ENCODE measurements at regions of chr9 and their contacts with region 1.

Region 1: DNA sequence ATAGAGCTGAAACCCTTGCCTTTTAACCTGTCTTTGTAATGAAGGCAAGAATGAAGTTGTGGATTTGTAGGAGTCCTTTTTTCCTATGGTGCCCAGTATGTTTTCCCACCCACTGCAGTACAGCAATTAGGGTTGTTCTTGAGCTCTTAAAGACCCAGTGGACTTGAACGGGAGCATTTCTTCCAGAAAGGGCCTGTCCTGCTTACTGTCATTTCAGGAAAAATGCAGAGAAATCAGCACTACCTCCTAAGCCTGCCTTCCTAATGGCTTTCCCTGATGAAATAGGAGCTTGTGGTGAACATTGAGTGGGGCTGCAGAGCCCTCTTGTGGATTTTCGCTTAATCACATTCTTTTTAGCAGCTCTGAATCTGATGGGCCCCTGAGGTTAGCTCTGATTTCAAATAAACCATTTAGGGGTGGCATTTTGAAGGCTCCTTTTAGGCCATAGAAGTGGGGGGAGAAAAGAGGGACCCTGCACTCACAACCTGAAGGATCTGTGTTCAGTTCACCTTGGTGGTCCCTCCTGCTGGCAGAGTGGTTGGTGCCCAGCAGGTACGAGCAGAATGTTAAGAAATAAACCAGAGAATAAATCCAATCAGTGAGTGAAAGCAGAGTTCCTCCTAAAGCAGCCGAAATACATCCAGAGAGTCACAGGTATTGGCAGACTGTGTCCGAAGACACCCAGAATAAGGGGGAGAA is 188.0 kb upstream of the KLF9 start:
- DNase-seq: peak; percentile 51 to 81 (median 68)
- H3K4me3 ChIP-seq: no peak overlapping the region
- H3K4me3 Mint-ChIP-seq: no peak overlapping the region
- H3K27ac ChIP-seq: no peak overlapping the region
- H3K27ac Mint-ChIP-seq: peak overlapping the region in 2 of 7 donors; percentile 7 to 48
- H3K4me1 ChIP-seq: peaks cover 3% of the 10 kb centered on the region in 2 donors
- H3K4me1 Mint-ChIP-seq: peaks cover 8% of the 10 kb centered on the region
- H3K27me3 ChIP-seq: no peaks in the 10 kb centered on the region
- H3K27me3 Mint-ChIP-seq: peaks cover 0 to 2% (median 2%) of the 10 kb centered on the region in 3 donors
- CTCF ChIP-seq: peak; percentile 80

Region 2: DNA sequence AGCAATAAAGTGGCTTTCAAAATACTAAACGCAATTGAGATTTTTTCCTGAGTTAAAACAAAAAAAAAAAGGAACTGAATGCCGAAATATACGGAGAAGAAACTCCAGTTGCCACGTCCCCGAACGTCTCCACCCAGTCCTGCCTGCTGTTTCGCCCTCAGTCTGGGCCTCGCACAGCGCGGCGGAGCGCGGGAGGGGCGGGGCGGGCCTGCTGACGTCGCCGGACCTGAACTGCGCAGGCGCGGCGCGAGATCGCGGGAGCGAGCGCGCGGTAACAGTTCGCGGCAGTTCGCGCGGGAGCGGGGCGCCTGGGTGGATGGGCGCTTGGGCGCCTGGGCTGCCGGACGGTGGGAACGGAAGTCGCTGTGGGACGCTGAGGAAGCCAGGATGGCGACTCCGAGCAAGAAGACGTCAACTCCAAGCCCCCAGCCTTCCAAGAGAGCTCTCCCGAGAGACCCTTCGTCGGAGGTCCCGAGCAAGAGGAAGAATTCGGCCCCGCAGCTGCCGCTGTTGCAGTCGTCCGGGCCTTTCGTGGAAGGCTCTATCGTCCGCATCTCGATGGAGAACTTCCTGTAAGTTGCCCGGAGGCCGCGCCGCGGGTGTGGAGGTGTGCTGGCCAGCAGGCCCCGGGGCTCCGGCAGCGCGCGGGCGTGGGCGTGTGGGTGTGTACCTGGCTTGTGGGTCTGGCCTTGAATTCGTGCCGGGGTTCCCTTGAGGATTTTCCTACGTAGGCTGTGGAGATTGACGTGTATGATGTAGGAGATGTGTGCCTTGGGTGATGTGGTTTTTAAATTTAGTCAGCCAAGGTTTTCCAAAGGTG is 343.6 kb before region 1 on chr9 and contains the start of gene SMC5:
- intact Hi-C with region 1: loop called in 1 of 2 experiments (anchors 10 kb)
- DNase-seq: peak; percentile 86 to 91 (median 91)
- H3K4me3 ChIP-seq: peak within 1 kb of the TSS; percentile 81 to 91 (median 86)
- H3K4me3 Mint-ChIP-seq: peak within 1 kb of the TSS; percentile 92 to 94
- H3K27ac ChIP-seq: peak within 1 kb of the TSS; percentile 93 to 96
- H3K27ac Mint-ChIP-seq: peak within 1 kb of the TSS; percentile 86 to 98 (median 94)
- H3K4me1 ChIP-seq: peaks cover 25 to 34% of the 10 kb centered on the region in 2 donors
- H3K4me1 Mint-ChIP-seq: peaks cover 53% of the 10 kb centered on the region
- H3K27me3 ChIP-seq: no peaks in the 10 kb centered on the region
- H3K27me3 Mint-ChIP-seq: peaks cover 0 to 3% (median 0%) of the 10 kb centered on the region in 3 donors
- CTCF ChIP-seq: no peak
- polyA plus RNA-seq, gene SMC5: 4.9 to 13.6 (median 5.1) TPM

Region 3: GRCh38 chr9:70340572-70340971 is 261.9 kb before region 1 on chr9:
- intact Hi-C with region 1: loop called (anchors 2 to 10 kb)
- DNase-seq: peak in 1 of 3 donors; percentile 29
- H3K4me3 ChIP-seq: no peak overlapping the region
- H3K4me3 Mint-ChIP-seq: no peak overlapping the region
- H3K27ac ChIP-seq: no peak overlapping the region
- H3K27ac Mint-ChIP-seq: no peak overlapping the region
- H3K4me1 ChIP-seq: no peaks in the 10 kb centered on the region
- H3K4me1 Mint-ChIP-seq: no peaks in the 10 kb centered on the region
- H3K27me3 ChIP-seq: no peaks in the 10 kb centered on the region
- H3K27me3 Mint-ChIP-seq: peaks cover 0 to 2% (median 0%) of the 10 kb centered on the region in 3 donors
- CTCF ChIP-seq: peak; percentile 64

Region 4: DNA sequence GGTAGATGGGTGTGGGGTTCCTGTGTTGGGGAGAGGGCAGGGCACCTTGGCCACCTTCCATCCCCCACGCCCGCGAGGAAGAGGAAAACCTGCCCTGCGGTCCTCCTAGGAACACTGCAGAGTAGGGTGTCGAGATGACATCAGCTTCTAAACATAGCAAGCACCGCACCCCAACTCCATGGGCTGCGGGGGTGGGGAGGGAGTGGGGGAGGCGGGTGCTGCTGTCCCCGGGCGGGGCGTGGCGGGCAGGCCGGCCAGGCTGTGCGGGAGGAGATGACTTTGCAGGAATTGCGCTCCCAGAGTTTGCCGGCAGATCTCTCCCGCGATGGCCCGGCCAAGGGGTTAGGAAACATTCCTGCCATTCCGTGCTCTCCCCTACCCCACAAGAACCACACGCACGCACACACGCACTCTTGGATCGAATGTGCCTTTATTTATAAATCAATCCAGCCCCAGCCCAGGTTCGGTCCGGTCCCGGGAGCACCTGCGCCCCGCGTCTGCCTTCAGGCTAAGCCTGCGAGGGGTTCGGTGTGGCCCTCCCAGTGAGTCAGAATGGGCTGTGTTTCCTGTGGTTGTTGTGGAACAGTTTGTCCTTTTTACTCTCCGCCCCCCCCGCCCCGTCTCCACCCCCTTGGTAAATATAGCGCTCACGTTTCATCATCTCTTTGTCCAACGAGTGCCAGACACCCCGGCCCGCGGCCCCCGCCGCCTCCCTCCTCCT is 182.8 kb before region 1 on chr9:
- intact Hi-C with region 1: loop called in 1 of 2 experiments (anchors 5 kb)
- DNase-seq: peak; percentile 93 to 94 (median 94)
- H3K4me3 ChIP-seq: peak overlapping the region; percentile 40 to 75 (median 54)
- H3K4me3 Mint-ChIP-seq: peak overlapping the region; percentile 92 to 97
- H3K27ac ChIP-seq: peak overlapping the region; percentile 97 to 99
- H3K27ac Mint-ChIP-seq: peak overlapping the region; percentile 99 to 100 (median 100)
- H3K4me1 ChIP-seq: peaks cover 36 to 49% of the 10 kb centered on the region in 2 donors
- H3K4me1 Mint-ChIP-seq: peaks cover 34% of the 10 kb centered on the region
- H3K27me3 ChIP-seq: no peaks in the 10 kb centered on the region
- H3K27me3 Mint-ChIP-seq: peaks cover 0 to 3% (median 2%) of the 10 kb centered on the region in 3 donors
- CTCF ChIP-seq: no peak

Region 5: DNA sequence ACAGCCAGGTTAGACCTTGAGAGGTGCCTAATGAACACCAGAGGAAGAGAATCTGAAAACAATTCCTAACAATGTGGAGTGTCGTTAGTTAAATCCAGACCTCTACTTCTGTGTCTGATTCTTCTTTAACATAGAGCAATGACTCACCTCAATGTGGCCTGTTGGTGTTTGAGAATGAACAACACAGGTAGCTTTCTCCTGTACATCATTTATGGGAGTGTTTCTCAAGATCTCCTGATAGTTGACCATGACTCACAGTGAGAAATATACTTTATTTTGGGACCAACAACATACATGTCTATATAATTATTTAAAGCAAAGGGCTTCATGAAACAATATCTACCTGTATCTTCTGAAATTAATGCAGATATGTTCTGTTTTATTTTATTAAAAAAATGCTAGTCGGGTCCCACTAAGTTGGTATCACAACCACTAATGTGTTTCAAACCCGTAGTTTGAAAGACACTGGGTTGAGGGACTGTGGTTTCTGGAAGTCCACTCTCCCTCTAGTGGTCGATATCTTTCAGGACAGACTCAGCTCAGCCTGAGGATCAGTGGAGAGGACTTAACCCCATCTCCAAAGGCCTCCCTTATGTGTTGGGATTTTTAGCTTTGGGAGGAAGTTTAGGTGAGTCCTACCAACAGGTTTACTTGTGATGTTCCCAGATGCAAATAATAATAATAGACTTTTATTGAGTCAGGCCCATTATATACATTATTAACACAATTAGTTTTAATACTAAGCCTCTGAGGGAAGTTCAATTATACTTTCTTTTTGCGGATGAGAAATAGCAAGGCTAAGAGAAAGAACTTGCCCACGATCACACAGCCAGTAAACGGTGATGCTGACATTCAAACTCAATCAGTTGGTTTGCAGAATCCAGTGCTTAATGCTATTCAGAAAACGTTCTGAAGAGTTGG is 118.0 kb before region 1 on chr9:
- intact Hi-C with region 1: loop called in 1 of 2 experiments (anchors 5 kb)
- DNase-seq: peak; percentile 51 to 63 (median 62)
- H3K4me3 ChIP-seq: no peak overlapping the region
- H3K4me3 Mint-ChIP-seq: no peak overlapping the region
- H3K27ac ChIP-seq: no peak overlapping the region
- H3K27ac Mint-ChIP-seq: peak overlapping the region in 2 of 7 donors; percentile 21 to 80
- H3K4me1 ChIP-seq: peaks cover 0 to 7% of the 10 kb centered on the region in 2 donors
- H3K4me1 Mint-ChIP-seq: peaks cover 15% of the 10 kb centered on the region
- H3K27me3 ChIP-seq: no peaks in the 10 kb centered on the region
- H3K27me3 Mint-ChIP-seq: peaks cover 0 to 6% (median 0%) of the 10 kb centered on the region in 3 donors
- CTCF ChIP-seq: peak; percentile 79

Region 6: DNA sequence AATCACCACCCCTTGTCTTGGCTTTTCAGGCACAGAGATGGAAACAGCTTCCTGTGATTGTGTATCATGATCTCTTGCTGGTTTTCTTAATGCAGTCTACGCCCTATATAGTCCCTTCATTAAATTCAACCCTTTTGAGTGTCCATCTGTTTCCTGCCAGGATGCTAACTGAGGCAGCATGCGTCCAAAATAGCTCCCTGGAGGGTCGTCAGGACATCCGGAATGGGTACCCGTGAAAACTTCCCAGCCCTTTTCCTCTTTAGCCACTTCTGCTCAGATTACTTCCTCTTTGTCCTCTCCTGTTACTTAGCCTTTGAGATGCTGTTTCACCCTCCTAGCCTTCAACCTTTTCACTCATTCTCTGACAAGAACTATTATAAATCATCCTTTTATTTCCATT is 108.2 kb before region 1 on chr9:
- intact Hi-C with region 1: loop called in 1 of 2 experiments (anchors 10 kb)
- DNase-seq: peak in 2 of 3 donors; percentile 41 to 45
- H3K4me3 ChIP-seq: peak overlapping the region in 1 of 3 experiments; percentile 45
- H3K4me3 Mint-ChIP-seq: peak overlapping the region; percentile 58 to 82
- H3K27ac ChIP-seq: no peak overlapping the region
- H3K27ac Mint-ChIP-seq: peak overlapping the region in 3 of 7 donors; percentile 28 to 75 (median 72)
- H3K4me1 ChIP-seq: peaks cover 25 to 26% of the 10 kb centered on the region in 2 donors
- H3K4me1 Mint-ChIP-seq: peaks cover 29% of the 10 kb centered on the region
- H3K27me3 ChIP-seq: no peaks in the 10 kb centered on the region
- H3K27me3 Mint-ChIP-seq: peaks cover 0 to 4% (median 0%) of the 10 kb centered on the region in 3 donors
- CTCF ChIP-seq: no peak

Region 7: GRCh38 chr9:70553707-70554673 is 48.5 kb before region 1 on chr9:
- intact Hi-C with region 1: loop called in 1 of 2 experiments (anchors 5 kb)
- DNase-seq: peak in 1 of 3 donors; percentile 62
- H3K4me3 ChIP-seq: no peak overlapping the region
- H3K4me3 Mint-ChIP-seq: no peak overlapping the region
- H3K27ac ChIP-seq: no peak overlapping the region
- H3K27ac Mint-ChIP-seq: peak overlapping the region in 4 of 7 donors; percentile 15 to 54 (median 36)
- H3K4me1 ChIP-seq: peaks cover 34 to 37% of the 10 kb centered on the region in 2 donors
- H3K4me1 Mint-ChIP-seq: peaks cover 49% of the 10 kb centered on the region
- H3K27me3 ChIP-seq: no peaks in the 10 kb centered on the region
- H3K27me3 Mint-ChIP-seq: peaks cover 0 to 8% (median 0%) of the 10 kb centered on the region in 3 donors
- CTCF ChIP-seq: no peak